HEK293T (cell line): ENCODE measurements at regions of chr1 and their contacts with region 1.

Region 1: DNA sequence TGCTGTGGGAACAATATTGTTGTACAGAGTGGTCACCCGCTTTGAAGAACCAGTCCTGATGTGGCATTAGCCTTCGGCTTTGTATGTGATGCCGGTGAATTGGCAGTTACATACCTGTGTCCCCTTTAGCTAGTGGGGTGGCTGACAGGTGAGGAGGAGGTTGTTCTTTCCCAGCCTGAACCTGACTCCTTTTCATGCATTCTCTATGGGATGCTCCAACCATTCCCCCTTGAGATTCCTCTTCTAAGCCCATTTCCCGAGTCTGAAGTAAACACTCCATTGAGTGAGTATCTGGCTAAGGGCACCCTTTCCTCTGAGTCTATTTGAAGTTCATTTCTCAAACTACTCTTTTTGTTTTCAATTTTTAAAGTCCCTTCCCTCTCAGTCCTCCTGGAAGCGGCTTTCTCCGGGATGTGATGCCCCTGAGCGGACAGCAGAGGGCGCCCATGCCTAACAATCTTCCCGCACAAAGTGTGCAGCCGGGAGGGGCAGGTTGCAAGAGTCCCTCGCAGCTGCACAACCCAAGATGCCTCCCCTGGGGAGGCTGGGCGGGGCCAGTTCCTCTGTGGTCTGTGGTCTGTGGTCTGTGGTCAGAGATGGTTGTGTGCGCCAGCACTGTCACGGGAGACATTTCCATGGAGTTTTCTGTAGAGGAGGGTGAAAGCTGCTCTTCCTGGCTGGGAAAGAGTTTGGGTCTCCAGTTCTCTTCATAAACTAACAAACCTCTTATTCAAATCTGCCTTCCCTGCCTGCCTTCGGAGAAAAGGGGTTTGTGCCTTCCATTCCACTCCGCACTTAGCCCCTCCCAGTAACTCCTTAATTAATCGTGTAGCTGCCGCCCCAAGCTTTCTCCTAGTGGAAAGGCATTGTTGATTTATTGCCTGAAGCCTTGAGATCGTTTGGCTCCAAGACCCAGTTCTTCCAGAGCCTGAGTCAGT is 36.4 kb upstream of the LMX1A start:
- DNase-seq: peak; percentile 95

Region 2: DNA sequence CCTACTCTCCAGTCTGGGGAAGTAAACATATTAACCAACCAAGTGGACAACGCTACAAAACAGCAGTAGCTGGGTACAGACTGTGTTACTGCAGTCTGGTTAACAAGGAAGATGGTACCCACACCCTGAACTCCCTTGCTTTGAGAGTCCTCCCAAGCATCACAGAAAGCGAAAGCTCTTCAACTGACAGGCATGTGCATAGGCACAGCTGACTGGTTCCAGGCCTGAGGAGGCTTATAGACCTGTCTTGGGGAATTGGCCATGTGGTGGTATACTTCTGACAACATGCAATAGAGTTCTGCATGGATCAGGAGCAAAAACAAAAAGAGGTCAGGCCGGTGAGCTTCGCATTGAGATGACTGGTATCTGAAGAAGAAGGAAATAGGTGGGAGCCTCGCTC is 53.7 kb before region 1 on chr1:
- CTCF ChIA-PET with region 1: no interaction called
- POLR2A ChIA-PET with region 1: no interaction called
- DNase-seq: no peak

Region 3: DNA sequence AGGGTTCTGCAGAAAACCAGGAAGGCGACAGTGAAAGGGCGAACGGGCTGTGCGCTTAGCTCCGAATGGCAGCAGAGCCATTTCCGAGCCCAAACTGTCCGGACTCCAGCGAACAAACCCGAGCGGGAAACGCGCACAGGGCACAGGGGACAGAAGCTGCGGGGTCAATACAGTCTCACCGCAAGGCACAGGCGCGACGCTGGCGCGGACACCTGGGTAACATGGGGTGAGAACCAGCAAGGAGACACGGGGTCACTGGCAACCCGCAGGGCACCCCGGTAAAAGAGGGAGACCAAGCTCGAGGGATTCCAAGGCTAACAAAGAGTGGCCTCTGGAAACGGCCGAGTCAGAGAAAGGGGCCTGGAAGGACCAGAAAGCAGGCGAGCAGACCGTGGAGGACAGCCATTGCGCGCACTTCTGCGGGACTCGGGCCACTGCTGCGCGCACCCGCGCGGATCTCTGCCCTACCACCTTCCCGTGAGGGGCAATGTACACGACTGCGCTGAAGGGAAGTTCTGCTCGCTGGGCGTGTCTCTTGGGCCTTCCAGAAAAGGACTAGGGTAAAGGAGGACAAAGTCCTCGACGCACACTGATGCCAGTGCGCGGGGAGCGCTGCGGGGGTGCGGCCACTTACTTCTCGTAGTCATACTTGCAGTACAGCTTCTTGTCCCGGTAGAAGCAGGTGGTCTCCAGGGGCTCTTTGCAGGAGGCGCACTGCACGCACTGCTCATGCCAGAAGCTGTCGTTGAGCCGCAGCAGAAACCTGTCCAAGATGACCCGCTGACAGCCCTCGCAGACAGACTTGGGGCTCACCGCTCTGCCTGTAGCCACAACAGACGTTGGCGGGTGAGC is 40.2 kb before region 1 on chr1:
- CTCF ChIA-PET with region 1: no interaction called
- POLR2A ChIA-PET with region 1: no interaction called
- DNase-seq: no peak

Region 4: DNA sequence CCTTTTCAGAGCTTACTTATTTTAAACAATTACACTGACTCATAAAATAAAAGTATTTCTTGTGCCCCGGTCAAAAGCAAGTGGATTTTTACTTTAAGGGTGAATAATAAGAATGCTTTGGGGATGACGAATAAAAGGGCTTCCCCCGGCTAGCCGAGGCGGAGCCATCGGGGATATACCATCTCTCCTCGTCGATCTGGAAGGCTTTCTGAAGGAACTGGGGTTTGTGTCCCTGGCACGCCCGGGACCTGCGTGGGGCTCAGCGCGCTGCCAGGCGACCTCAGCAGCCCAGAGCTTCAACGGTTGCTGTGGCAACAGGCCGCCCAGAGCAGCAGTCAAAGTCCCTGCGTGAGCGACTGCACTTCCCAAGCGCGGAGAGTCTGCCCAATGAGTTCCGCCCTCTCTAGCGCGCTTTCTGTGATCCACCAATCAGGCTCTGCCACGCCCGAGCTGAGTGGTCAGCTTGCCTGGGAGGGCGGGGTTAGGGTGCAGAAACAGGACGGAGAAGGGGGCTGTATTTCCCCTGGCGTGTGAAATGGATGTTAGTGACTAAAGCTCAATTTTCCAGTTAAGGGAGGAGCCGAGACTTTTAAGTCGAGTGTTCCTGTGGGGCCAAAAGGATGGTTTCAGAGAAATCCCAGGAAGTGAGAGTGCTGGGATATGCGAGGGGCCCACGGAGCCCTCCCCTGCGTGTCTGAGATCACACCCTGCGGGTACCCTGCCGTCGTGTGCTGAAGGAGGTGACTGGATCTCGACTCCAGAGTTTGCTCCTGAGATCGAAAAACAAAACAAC is 205.2 kb after region 1 on chr1:
- CTCF ChIA-PET with region 1: interaction called, 19 read pairs
- POLR2A ChIA-PET with region 1: no interaction called
- DNase-seq: peak; percentile 95